MCF 10A (cell line): ENCODE measurements at regions of chr12 and their contacts with region 1.

Region 1: GRCh38 chr12:49347384-49348237 is 923 bp downstream of the DNAJC22 start:
- DNase-seq: peak; percentile 87
- H3K4me3 Mint-ChIP-seq: peak overlapping the region; percentile 68
- H3K27ac Mint-ChIP-seq: no peak overlapping the region
- H3K4me1 Mint-ChIP-seq: peaks cover 9% of the 10 kb centered on the region
- H3K27me3 Mint-ChIP-seq: peaks cover 29% of the 10 kb centered on the region
- CTCF ChIP-seq: peak; percentile 95

Region 2: GRCh38 chr12:49043856-49044258 is 303.8 kb before region 1 on chr12:
- CTCF ChIA-PET with region 1: no interaction called
- POLR2A ChIA-PET with region 1: no interaction called
- intact Hi-C with region 1: no loop called
- DNase-seq: peak; percentile 56
- H3K4me3 Mint-ChIP-seq: no peak overlapping the region
- H3K27ac Mint-ChIP-seq: no peak overlapping the region
- H3K4me1 Mint-ChIP-seq: no peaks in the 10 kb centered on the region
- H3K27me3 Mint-ChIP-seq: no peaks in the 10 kb centered on the region
- CTCF ChIP-seq: peak; percentile 55

Region 3: GRCh38 chr12:49331380-49332222 is 16.0 kb before region 1 on chr12:
- CTCF ChIA-PET with region 1: interaction called, 19 read pairs
- POLR2A ChIA-PET with region 1: no interaction called
- intact Hi-C with region 1: no loop called
- DNase-seq: peak; percentile 51
- H3K4me3 Mint-ChIP-seq: no peak overlapping the region
- H3K27ac Mint-ChIP-seq: no peak overlapping the region
- H3K4me1 Mint-ChIP-seq: no peaks in the 10 kb centered on the region
- H3K27me3 Mint-ChIP-seq: no peaks in the 10 kb centered on the region
- CTCF ChIP-seq: peak; percentile 72

Region 4: GRCh38 chr12:49336645-49337584 is 10.7 kb before region 1 on chr12 and contains the start of gene C1QL4:
- CTCF ChIA-PET with region 1: interaction called, 19 read pairs
- POLR2A ChIA-PET with region 1: interaction called, 3 read pairs
- intact Hi-C with region 1: no loop called
- DNase-seq: peak; percentile 70
- H3K4me3 Mint-ChIP-seq: peak within 1 kb of the TSS; percentile 59
- H3K27ac Mint-ChIP-seq: no peak within 1 kb of the TSS
- H3K4me1 Mint-ChIP-seq: peaks cover 10% of the 10 kb centered on the region
- H3K27me3 Mint-ChIP-seq: peaks cover 15% of the 10 kb centered on the region
- CTCF ChIP-seq: peak; percentile 97
- total RNA-seq, gene C1QL4: 0.20 TPM in 1 of 2 replicates, not detected in the other